ENCODE measurements at regions of chr1 and their contacts with region 1.

Region 1: GRCh38 chr1:220810179-220810653 is 23.5 kb downstream of the MTARC1 start:
- DNase-seq: peak; percentile 89
- H3K4me3 Mint-ChIP-seq: peak overlapping the region; percentile 61
- H3K27ac Mint-ChIP-seq: no peak overlapping the region
- H3K4me1 Mint-ChIP-seq: peaks cover 4% of the 10 kb centered on the region
- H3K27me3 Mint-ChIP-seq: no peaks in the 10 kb centered on the region

Region 2: GRCh38 chr1:220775240-220775853 is 34.9 kb before region 1 on chr1:
- intact Hi-C with region 1: no loop called
- DNase-seq: peak; percentile 78
- H3K4me3 Mint-ChIP-seq: no peak overlapping the region
- H3K27ac Mint-ChIP-seq: no peak overlapping the region
- H3K4me1 Mint-ChIP-seq: no peaks in the 10 kb centered on the region
- H3K27me3 Mint-ChIP-seq: peaks cover 3% of the 10 kb centered on the region

Region 3: GRCh38 chr1:220791285-220791684 is 18.9 kb before region 1 on chr1:
- intact Hi-C with region 1: no loop called
- DNase-seq: no peak
- H3K4me3 Mint-ChIP-seq: no peak overlapping the region
- H3K27ac Mint-ChIP-seq: no peak overlapping the region
- H3K4me1 Mint-ChIP-seq: no peaks in the 10 kb centered on the region
- H3K27me3 Mint-ChIP-seq: peaks cover 32% of the 10 kb centered on the region

Region 4: DNA sequence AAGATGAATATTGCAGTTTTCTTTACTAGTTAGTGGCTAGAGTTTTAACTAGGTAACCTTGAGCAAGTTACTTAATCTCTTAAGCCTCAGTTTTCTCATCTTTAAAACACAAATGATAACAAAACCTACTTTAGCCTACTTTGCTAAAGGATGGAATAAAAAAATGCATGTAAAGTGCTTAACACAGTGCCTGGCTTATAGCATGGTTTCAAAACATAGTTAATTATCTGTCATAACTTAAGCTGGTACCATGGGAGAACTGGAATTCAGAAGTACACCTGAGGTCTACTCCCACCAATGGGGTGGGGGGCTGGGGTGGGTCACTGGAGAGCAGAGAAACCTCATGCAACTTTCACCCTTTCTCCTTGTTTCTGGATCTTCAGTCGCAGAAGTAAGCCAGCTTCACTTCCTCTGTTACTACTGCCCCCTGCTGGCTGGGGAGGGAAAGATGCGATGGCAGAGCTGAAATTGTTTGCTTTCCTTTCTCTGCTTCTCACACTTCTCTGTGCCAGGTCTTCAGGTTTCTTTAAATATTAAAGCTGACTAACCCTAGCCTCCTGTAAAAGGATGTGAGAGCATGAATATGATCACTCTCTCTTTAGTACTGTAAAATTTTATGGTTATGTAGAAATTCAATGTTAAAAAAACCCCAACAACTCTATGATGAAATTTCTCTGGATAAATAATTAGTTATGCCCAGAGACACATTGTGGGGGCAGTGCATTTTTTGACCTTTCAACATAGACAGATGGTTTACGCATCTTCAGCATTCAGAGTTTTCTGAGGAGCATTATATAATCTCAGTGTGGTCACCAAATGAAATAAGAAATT is 393.2 kb after region 1 on chr1:
- intact Hi-C with region 1: loop called (anchors 1 kb)
- DNase-seq: peak; percentile 91
- H3K4me3 Mint-ChIP-seq: no peak overlapping the region
- H3K27ac Mint-ChIP-seq: no peak overlapping the region
- H3K4me1 Mint-ChIP-seq: peaks cover 4% of the 10 kb centered on the region
- H3K27me3 Mint-ChIP-seq: no peaks in the 10 kb centered on the region

Region 5: GRCh38 chr1:221858818-221859611 is 1048.8 kb after region 1 on chr1:
- intact Hi-C with region 1: no loop called
- DNase-seq: no peak
- H3K4me3 Mint-ChIP-seq: no peak overlapping the region
- H3K27ac Mint-ChIP-seq: no peak overlapping the region
- H3K4me1 Mint-ChIP-seq: peaks cover 6% of the 10 kb centered on the region
- H3K27me3 Mint-ChIP-seq: peaks cover 2% of the 10 kb centered on the region

Measured in activated CD4-positive, alpha-beta T cell treated with anti-CD3 and anti-CD28 coated beads, Interleukin-2, amount 10 ng/mL, durations not matched to agents 24 days and 14 days (primary cell).